ENCODE measurements at regions of chr18 and their contacts with region 1.

Region 1: GRCh38 chr18:63518178-63519012 is 23.8 kb upstream of the SERPINB12 start:
- DNase-seq: peak; percentile 62
- H3K4me3 Mint-ChIP-seq: no peak overlapping the region
- H3K27ac Mint-ChIP-seq: no peak overlapping the region
- H3K4me1 Mint-ChIP-seq: no peaks in the 10 kb centered on the region
- H3K27me3 Mint-ChIP-seq: peaks cover 5% of the 10 kb centered on the region

Region 2: DNA sequence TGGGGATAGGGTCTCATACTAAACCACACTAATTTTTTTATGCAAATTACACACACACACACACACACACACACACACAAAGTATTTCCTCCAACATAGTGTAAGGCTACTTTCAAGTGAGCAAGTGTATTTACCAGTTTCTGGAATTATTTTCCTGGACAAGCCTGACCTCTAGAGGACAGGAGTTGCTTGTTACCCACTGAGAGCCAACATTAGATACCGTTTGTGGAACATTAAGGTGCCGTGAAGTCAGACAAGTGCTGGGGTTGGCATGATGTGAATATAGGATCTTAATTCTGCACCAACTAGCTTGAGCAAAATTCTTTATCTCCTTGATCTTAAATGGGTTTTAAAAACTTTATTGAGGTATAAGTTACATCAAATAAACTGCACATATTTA is 329.8 kb after region 1 on chr18:
- CTCF ChIA-PET with region 1: interaction called, 56 read pairs
- POLR2A ChIA-PET with region 1: no interaction called
- intact Hi-C with region 1: loop called (anchors 1 kb)
- DNase-seq: no peak
- H3K4me3 Mint-ChIP-seq: no peak overlapping the region
- H3K27ac Mint-ChIP-seq: no peak overlapping the region
- H3K4me1 Mint-ChIP-seq: no peaks in the 10 kb centered on the region
- H3K27me3 Mint-ChIP-seq: peaks cover 11% of the 10 kb centered on the region

Region 3: GRCh38 chr18:63994783-63995399 is 476.5 kb after region 1 on chr18:
- CTCF ChIA-PET with region 1: interaction called, 5 read pairs
- POLR2A ChIA-PET with region 1: no interaction called
- intact Hi-C with region 1: loop called (anchors 1 kb)
- DNase-seq: peak; percentile 56
- H3K4me3 Mint-ChIP-seq: no peak overlapping the region
- H3K27ac Mint-ChIP-seq: no peak overlapping the region
- H3K4me1 Mint-ChIP-seq: peaks cover 7% of the 10 kb centered on the region
- H3K27me3 Mint-ChIP-seq: no peaks in the 10 kb centered on the region